Breast epithelium (tissue), 4 donors: ENCODE measurements at regions of chr9 and their contacts with region 1.

Region 1: GRCh38 chr9:127980706-127981558 is at the start of gene EEIG1:
- DNase-seq: peak; percentile 92 to 96
- H3K4me3 ChIP-seq: peak within 1 kb of the TSS; percentile 76 to 93 (median 82)
- H3K27ac ChIP-seq: peak within 1 kb of the TSS; percentile 98 to 99
- H3K4me1 ChIP-seq: peaks cover 0 to 22% of the 10 kb centered on the region in 2 donors
- H3K27me3 ChIP-seq: no peaks in the 10 kb centered on the region
- CTCF ChIP-seq: no peak
- POLR2A ChIP-seq: no peak
- total RNA-seq, gene EEIG1: 7.7 to 32.1 (median 19.7) TPM

Region 2: GRCh38 chr9:127214421-127215267 is 766.3 kb before region 1 on chr9:
- intact Hi-C with region 1: loop called (anchors 10 kb)
- DNase-seq: peak; percentile 45 to 67
- H3K4me3 ChIP-seq: no peak overlapping the region
- H3K27ac ChIP-seq: no peak overlapping the region
- H3K4me1 ChIP-seq: no peaks in the 10 kb centered on the region
- H3K27me3 ChIP-seq: no peaks in the 10 kb centered on the region
- CTCF ChIP-seq: peak; percentile 55 to 72 (median 68)
- POLR2A ChIP-seq: no peak

Region 3: GRCh38 chr9:128007566-128008138 is 26.7 kb after region 1 on chr9:
- intact Hi-C with region 1: no loop called
- DNase-seq: peak in 1 of 2 donors; percentile 63
- H3K4me3 ChIP-seq: no peak overlapping the region
- H3K27ac ChIP-seq: peak overlapping the region; percentile 82 to 90
- H3K4me1 ChIP-seq: no peaks in the 10 kb centered on the region
- H3K27me3 ChIP-seq: no peaks in the 10 kb centered on the region
- CTCF ChIP-seq: no peak
- POLR2A ChIP-seq: no peak

Region 4: GRCh38 chr9:128081056-128081455 is 100.1 kb after region 1 on chr9:
- intact Hi-C with region 1: loop called (anchors 10 kb)
- DNase-seq: no peak
- H3K4me3 ChIP-seq: no peak overlapping the region
- H3K27ac ChIP-seq: peak overlapping the region; percentile 83 to 85
- H3K4me1 ChIP-seq: peaks cover 5 to 10% of the 10 kb centered on the region in 2 donors
- H3K27me3 ChIP-seq: no peaks in the 10 kb centered on the region
- CTCF ChIP-seq: no peak
- POLR2A ChIP-seq: no peak

Region 5: GRCh38 chr9:129121483-129121882 is 1140.6 kb after region 1 on chr9:
- intact Hi-C with region 1: no loop called
- DNase-seq: no peak
- H3K4me3 ChIP-seq: no peak overlapping the region
- H3K27ac ChIP-seq: peak overlapping the region in 1 of 2 donors; percentile 13
- H3K4me1 ChIP-seq: no peaks in the 10 kb centered on the region
- H3K27me3 ChIP-seq: no peaks in the 10 kb centered on the region
- CTCF ChIP-seq: no peak
- POLR2A ChIP-seq: no peak